Natural killer cell (primary cell): ENCODE measurements at regions of chrX and their contacts with region 1.

Region 1: GRCh38 chrX:3037218-3037617 is 4.1 kb upstream of the ARSF start:
- DNase-seq: no peak
- ATAC-seq: no peak
- H3K4me3 ChIP-seq: no peak overlapping the region
- H3K4me3 Mint-ChIP-seq: no peak overlapping the region
- H3K27ac ChIP-seq: no peak overlapping the region
- H3K27ac Mint-ChIP-seq: no peak overlapping the region
- H3K4me1 ChIP-seq: no peaks in the 10 kb centered on the region
- H3K4me1 Mint-ChIP-seq: peaks cover 0 to 5% of the 10 kb centered on the region in 2 donors
- H3K27me3 ChIP-seq: no peaks in the 10 kb centered on the region
- H3K27me3 Mint-ChIP-seq: peaks cover 0 to 13% of the 10 kb centered on the region in 2 donors
- CTCF ChIP-seq: no peak

Region 2: GRCh38 chrX:2875798-2876399 is 161.3 kb before region 1 on chrX:
- intact Hi-C with region 1: loop called (anchors 10 kb)
- DNase-seq: peak in 1 of 2 donors; percentile 2
- ATAC-seq: peak in 2 of 3 donors; percentile 42 to 53
- H3K4me3 ChIP-seq: no peak overlapping the region
- H3K4me3 Mint-ChIP-seq: no peak overlapping the region
- H3K27ac ChIP-seq: no peak overlapping the region
- H3K27ac Mint-ChIP-seq: no peak overlapping the region
- H3K4me1 ChIP-seq: no peaks in the 10 kb centered on the region
- H3K4me1 Mint-ChIP-seq: no peaks in the 10 kb centered on the region
- H3K27me3 ChIP-seq: no peaks in the 10 kb centered on the region
- H3K27me3 Mint-ChIP-seq: peaks cover 8 to 14% of the 10 kb centered on the region in 2 donors
- CTCF ChIP-seq: peak; percentile 48

Region 3: GRCh38 chrX:3052860-3053259 is 15.6 kb after region 1 on chrX:
- intact Hi-C with region 1: no loop called
- DNase-seq: no peak
- ATAC-seq: no peak
- H3K4me3 ChIP-seq: no peak overlapping the region
- H3K4me3 Mint-ChIP-seq: no peak overlapping the region
- H3K27ac ChIP-seq: no peak overlapping the region
- H3K27ac Mint-ChIP-seq: no peak overlapping the region
- H3K4me1 ChIP-seq: no peaks in the 10 kb centered on the region
- H3K4me1 Mint-ChIP-seq: no peaks in the 10 kb centered on the region
- H3K27me3 ChIP-seq: no peaks in the 10 kb centered on the region
- H3K27me3 Mint-ChIP-seq: peaks cover 0 to 8% of the 10 kb centered on the region in 2 donors
- CTCF ChIP-seq: no peak

Region 4: DNA sequence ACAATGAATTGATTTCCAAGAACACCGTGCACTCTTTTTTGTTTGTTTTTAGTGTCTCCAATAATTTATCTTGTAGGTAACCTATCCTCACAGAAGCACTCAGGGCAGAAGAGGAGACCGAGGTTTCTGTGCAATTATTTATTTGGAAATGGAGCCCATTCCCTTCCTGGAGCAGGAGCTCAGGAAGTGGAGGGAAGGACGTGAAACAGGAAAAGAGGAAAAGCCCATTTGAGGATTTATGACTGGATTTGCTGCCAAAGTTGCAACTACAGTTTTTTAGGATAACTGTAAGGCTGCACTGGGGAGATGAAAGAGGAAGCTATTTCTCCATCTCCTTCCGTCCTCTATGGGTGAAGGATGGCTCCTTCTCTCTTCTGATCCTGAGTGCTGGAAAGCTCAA is 340.9 kb after region 1 on chrX:
- intact Hi-C with region 1: no loop called
- DNase-seq: no peak
- ATAC-seq: no peak
- H3K4me3 ChIP-seq: no peak overlapping the region
- H3K4me3 Mint-ChIP-seq: no peak overlapping the region
- H3K27ac ChIP-seq: no peak overlapping the region
- H3K27ac Mint-ChIP-seq: no peak overlapping the region
- H3K4me1 ChIP-seq: no peaks in the 10 kb centered on the region
- H3K4me1 Mint-ChIP-seq: no peaks in the 10 kb centered on the region
- H3K27me3 ChIP-seq: no peaks in the 10 kb centered on the region
- H3K27me3 Mint-ChIP-seq: no peaks in the 10 kb centered on the region
- CTCF ChIP-seq: no peak

Region 5: GRCh38 chrX:3638280-3638873 is 601.2 kb after region 1 on chrX:
- intact Hi-C with region 1: loop called (anchors 10 kb)
- DNase-seq: peak in 1 of 2 donors; percentile 55
- ATAC-seq: peak in 2 of 3 donors; percentile 49 to 68
- H3K4me3 ChIP-seq: no peak overlapping the region
- H3K4me3 Mint-ChIP-seq: no peak overlapping the region
- H3K27ac ChIP-seq: no peak overlapping the region
- H3K27ac Mint-ChIP-seq: peak overlapping the region; percentile 1 to 5
- H3K4me1 ChIP-seq: no peaks in the 10 kb centered on the region
- H3K4me1 Mint-ChIP-seq: peaks cover 5 to 13% of the 10 kb centered on the region in 2 donors
- H3K27me3 ChIP-seq: no peaks in the 10 kb centered on the region
- H3K27me3 Mint-ChIP-seq: no peaks in the 10 kb centered on the region
- CTCF ChIP-seq: peak; percentile 42